H1 (cell line): ENCODE measurements at regions of chr2 and their contacts with region 1.

Region 1: GRCh38 chr2:39513641-39514094 is 76.6 kb upstream of the MAP4K3 start:
- DNase-seq: no peak
- H3K4me3 ChIP-seq: no peak overlapping the region
- H3K27ac ChIP-seq: no peak overlapping the region
- H3K4me1 ChIP-seq: peaks cover 5 to 29% (median 15%) of the 10 kb centered on the region in 4 experiments
- H3K27me3 ChIP-seq: no peaks in the 10 kb centered on the region
- CTCF ChIP-seq: peak; percentile 10 to 60 (median 46)
- EP300 ChIP-seq: no peak
- POLR2A ChIP-seq: no peak
- RAD21 ChIP-seq: peak; percentile 52 to 69; a peak in 3 of 4 replicates

Region 2: DNA sequence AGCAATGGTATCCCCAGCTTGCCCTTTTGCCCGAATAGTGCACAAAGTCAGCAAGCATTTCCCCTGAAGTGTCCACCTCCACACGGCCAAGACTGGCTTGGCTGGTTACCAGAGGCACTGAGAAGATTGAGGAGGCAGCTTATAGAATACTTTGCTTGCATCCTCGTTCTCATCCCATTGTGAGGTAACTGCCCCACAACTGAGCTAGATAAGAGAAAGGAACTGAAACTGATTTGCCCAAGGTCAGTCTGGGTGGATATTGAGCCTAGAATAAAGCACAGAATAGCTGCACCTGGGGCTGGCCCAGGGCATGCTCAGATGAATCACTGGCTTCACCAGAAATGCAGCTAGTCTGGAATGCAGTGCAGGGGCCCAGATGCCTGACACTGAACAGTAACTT is 43.9 kb before region 1 on chr2:
- CTCF ChIA-PET with region 1: no interaction called
- POLR2A ChIA-PET with region 1: no interaction called
- DNase-seq: no peak
- H3K4me3 ChIP-seq: no peak overlapping the region
- H3K27ac ChIP-seq: no peak overlapping the region
- H3K4me1 ChIP-seq: peaks cover 0 to 10% (median 7%) of the 10 kb centered on the region in 4 experiments; a peak in 3 of 7 replicates
- H3K27me3 ChIP-seq: no peaks in the 10 kb centered on the region
- CTCF ChIP-seq: no peak
- EP300 ChIP-seq: no peak
- POLR2A ChIP-seq: no peak
- RAD21 ChIP-seq: no peak

Region 3: GRCh38 chr2:39494784-39495251 is 18.9 kb before region 1 on chr2:
- CTCF ChIA-PET with region 1: interaction called, 10 read pairs
- POLR2A ChIA-PET with region 1: no interaction called
- DNase-seq: no peak
- H3K4me3 ChIP-seq: no peak overlapping the region
- H3K27ac ChIP-seq: no peak overlapping the region
- H3K4me1 ChIP-seq: peaks cover 2 to 13% (median 3%) of the 10 kb centered on the region in 4 experiments; a peak in 5 of 7 replicates
- H3K27me3 ChIP-seq: no peaks in the 10 kb centered on the region
- CTCF ChIP-seq: no peak
- EP300 ChIP-seq: no peak
- POLR2A ChIP-seq: no peak
- RAD21 ChIP-seq: no peak

Region 4: GRCh38 chr2:39503277-39503676 is 10.4 kb before region 1 on chr2:
- CTCF ChIA-PET with region 1: interaction called, 12 read pairs
- POLR2A ChIA-PET with region 1: no interaction called
- DNase-seq: no peak
- H3K4me3 ChIP-seq: no peak overlapping the region
- H3K27ac ChIP-seq: no peak overlapping the region
- H3K4me1 ChIP-seq: peaks cover 0 to 17% (median 5%) of the 10 kb centered on the region in 4 experiments; a peak in 6 of 7 replicates
- H3K27me3 ChIP-seq: no peaks in the 10 kb centered on the region
- CTCF ChIP-seq: no peak
- EP300 ChIP-seq: no peak
- POLR2A ChIP-seq: no peak
- RAD21 ChIP-seq: no peak